BJ (cell line): ENCODE measurements at regions of chr19 and their contacts with region 1.

Region 1: GRCh38 chr19:55418185-55418584 is 10.6 kb upstream of the UBE2S start:
- DNase-seq: peak; percentile 37
- H3K4me3 ChIP-seq: no peak overlapping the region
- H3K27me3 ChIP-seq: no peaks in the 10 kb centered on the region
- CTCF ChIP-seq: peak; percentile 81

Region 2: GRCh38 chr19:55279770-55280643 is 138.2 kb before region 1 on chr19 and contains the start of gene HSPBP1:
- CTCF ChIA-PET with region 1: interaction called, 10 read pairs
- POLR2A ChIA-PET with region 1: interaction called, 7 read pairs
- DNase-seq: peak; percentile 78
- H3K4me3 ChIP-seq: peak within 1 kb of the TSS; percentile 73
- H3K27me3 ChIP-seq: no peaks in the 10 kb centered on the region
- CTCF ChIP-seq: no peak
- polyA plus RNA-seq, gene HSPBP1: 24.4 and 43.8 TPM in 2 replicates

Region 3: GRCh38 chr19:55289117-55289796 is 128.9 kb before region 1 on chr19:
- CTCF ChIA-PET with region 1: interaction called, 60 read pairs
- POLR2A ChIA-PET with region 1: no interaction called
- DNase-seq: no peak
- H3K4me3 ChIP-seq: no peak overlapping the region
- H3K27me3 ChIP-seq: no peaks in the 10 kb centered on the region
- CTCF ChIP-seq: no peak

Region 4: GRCh38 chr19:55407800-55408532 is 10.2 kb before region 1 on chr19:
- CTCF ChIA-PET with region 1: interaction called, 13 read pairs
- POLR2A ChIA-PET with region 1: interaction called, 4 read pairs
- DNase-seq: peak; percentile 97
- H3K4me3 ChIP-seq: peak overlapping the region; percentile 92
- H3K27me3 ChIP-seq: no peaks in the 10 kb centered on the region
- CTCF ChIP-seq: no peak

Region 5: DNA sequence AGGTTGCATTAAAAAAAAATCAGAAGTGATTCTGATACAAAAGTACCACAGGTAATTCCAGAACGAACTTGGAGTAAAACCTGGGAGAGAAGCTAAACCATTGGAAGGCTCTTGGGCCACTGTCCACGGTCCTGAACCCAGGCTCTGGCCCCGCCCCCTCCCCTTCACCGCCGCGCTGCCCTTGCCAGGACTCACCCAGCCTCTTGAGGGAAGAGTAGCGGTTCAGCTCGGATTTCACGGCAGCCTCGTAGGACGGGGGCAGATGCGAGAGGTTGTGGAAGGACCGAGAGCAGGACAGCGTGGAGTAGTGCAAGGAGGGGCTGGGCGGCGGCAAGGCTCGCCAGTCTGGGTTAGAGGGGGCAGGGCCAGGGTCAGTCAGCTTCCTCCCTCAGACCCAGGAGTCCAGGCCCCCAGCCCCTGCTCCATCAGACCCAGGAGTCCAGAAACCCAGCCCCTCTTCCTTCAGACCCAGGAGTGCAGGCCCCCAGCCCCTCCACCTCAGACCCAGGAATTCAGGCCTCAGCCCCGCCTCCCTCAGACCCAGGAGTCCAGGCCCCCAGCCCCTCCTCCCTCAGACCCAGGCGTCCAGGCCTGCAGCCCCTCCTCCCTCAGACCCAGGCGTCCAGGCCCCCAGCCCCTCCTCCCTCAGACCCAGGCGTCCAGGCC is 19.4 kb after region 1 on chr19:
- CTCF ChIA-PET with region 1: interaction called, 17 read pairs
- POLR2A ChIA-PET with region 1: no interaction called
- DNase-seq: no peak
- H3K4me3 ChIP-seq: no peak overlapping the region
- H3K27me3 ChIP-seq: peaks cover 22% of the 10 kb centered on the region
- CTCF ChIP-seq: no peak